H1 (cell line): ENCODE measurements at regions of chr19 and their contacts with region 1.

Region 1: GRCh38 chr19:51873097-51873496 is 14.7 kb downstream of the ZNF577 start:
- DNase-seq: no peak
- H3K4me3 ChIP-seq: no peak overlapping the region
- H3K27ac ChIP-seq: no peak overlapping the region
- H3K4me1 ChIP-seq: no peaks in the 10 kb centered on the region
- H3K27me3 ChIP-seq: no peaks in the 10 kb centered on the region
- CTCF ChIP-seq: no peak
- EP300 ChIP-seq: no peak
- POLR2A ChIP-seq: no peak
- RAD21 ChIP-seq: no peak

Region 2: DNA sequence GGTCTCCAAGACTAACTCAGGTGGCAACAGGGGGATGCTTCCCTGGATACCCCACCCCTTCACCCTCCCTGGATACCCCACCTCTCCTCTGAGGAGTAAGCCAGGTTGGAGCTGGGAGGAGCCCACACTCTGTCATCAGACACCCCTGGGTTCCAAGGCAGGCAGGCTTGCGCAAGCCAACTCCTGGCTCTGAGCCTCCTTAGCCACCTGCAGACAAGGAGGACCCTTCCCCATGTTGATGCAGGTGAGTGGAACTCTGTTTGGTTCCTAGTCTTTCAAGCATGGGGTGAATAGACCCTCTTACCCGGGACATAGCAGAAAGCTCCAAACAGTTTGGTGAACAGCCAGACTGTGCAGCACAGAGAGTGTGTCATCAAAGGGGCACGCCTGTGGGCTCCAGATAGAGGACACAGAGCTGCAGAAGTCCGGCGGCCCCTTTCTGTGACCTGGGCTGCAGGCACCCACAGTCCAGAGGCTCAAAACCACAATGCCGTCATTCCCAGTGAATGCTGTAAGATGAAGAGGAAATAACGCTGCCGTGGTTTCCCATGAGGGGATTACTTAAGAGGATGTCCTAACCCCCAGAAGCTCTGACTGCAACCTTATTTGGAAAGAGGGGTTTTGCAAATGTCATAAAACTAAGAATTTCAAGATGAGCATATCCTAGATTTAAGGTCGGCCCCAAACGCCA is 137.2 kb before region 1 on chr19:
- CTCF ChIA-PET with region 1: no interaction called
- POLR2A ChIA-PET with region 1: no interaction called
- DNase-seq: no peak
- H3K4me3 ChIP-seq: no peak overlapping the region
- H3K27ac ChIP-seq: no peak overlapping the region
- H3K4me1 ChIP-seq: peaks cover 0 to 3% (median 0%) of the 10 kb centered on the region in 4 experiments; a peak in 2 of 7 replicates
- H3K27me3 ChIP-seq: no peaks in the 10 kb centered on the region
- CTCF ChIP-seq: no peak
- EP300 ChIP-seq: no peak
- POLR2A ChIP-seq: no peak
- RAD21 ChIP-seq: no peak

Region 3: DNA sequence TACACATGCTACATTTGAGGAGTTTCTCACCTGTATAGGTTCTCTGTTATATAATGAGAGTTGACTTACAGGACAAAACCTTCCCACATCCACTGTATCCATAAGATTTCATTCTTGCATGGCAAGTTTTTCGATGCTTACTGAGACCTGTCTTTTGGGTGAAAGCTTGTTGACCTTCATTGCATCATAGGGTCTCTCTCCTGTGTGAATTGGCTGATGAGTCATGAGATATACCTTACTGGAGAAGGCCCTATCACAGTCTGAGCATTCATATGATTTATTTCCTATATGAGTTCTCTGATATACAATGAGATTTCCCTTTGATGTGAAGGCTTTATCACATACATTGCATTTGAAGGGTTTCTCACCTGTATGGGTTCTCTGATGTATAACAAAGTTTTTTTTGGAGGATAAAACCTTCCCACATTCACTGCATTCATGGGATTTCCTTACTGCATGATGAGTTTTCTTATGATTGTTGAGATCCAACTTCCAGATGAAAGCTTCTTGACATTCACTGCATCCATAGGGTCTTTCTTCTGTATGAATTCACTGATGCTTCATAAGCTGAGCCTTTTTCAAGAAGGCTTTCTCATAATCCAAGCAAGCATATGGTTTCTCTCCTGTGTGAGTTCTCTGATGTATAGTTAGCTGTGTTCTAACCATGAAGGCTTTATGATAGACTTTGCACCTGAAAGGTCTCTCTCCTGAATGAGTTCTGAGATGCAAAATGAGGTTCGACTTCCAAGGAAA is 11.1 kb before region 1 on chr19:
- CTCF ChIA-PET with region 1: no interaction called
- POLR2A ChIA-PET with region 1: interaction called, 19 read pairs
- DNase-seq: no peak
- H3K4me3 ChIP-seq: no peak overlapping the region; a peak in 1 of 8 replicates
- H3K27ac ChIP-seq: no peak overlapping the region
- H3K4me1 ChIP-seq: no peaks in the 10 kb centered on the region
- H3K27me3 ChIP-seq: no peaks in the 10 kb centered on the region
- CTCF ChIP-seq: no peak
- EP300 ChIP-seq: no peak
- POLR2A ChIP-seq: no peak
- RAD21 ChIP-seq: no peak

Region 4: GRCh38 chr19:51887522-51888498 is 14.7 kb after region 1 on chr19 and contains the start of gene ZNF577:
- CTCF ChIA-PET with region 1: no interaction called
- POLR2A ChIA-PET with region 1: interaction called, 13 read pairs
- DNase-seq: peak; percentile 82 to 89
- H3K4me3 ChIP-seq: peak within 1 kb of the TSS; percentile 82 to 87 (median 84)
- H3K27ac ChIP-seq: peak within 1 kb of the TSS; percentile 82
- H3K4me1 ChIP-seq: peaks cover 0 to 3% (median 0%) of the 10 kb centered on the region in 4 experiments; a peak in 1 of 7 replicates
- H3K27me3 ChIP-seq: no peaks in the 10 kb centered on the region
- CTCF ChIP-seq: no peak
- EP300 ChIP-seq: peak in 1 of 2 experiments; percentile 55; a peak in 1 of 3 replicates
- POLR2A ChIP-seq: peak; percentile 81 to 87
- RAD21 ChIP-seq: no peak
- total RNA-seq, gene ZNF577: 14.9 and 19.3 TPM in 2 replicates